ENCODE measurements at regions of chr22 and their contacts with region 1.

Region 1: DNA sequence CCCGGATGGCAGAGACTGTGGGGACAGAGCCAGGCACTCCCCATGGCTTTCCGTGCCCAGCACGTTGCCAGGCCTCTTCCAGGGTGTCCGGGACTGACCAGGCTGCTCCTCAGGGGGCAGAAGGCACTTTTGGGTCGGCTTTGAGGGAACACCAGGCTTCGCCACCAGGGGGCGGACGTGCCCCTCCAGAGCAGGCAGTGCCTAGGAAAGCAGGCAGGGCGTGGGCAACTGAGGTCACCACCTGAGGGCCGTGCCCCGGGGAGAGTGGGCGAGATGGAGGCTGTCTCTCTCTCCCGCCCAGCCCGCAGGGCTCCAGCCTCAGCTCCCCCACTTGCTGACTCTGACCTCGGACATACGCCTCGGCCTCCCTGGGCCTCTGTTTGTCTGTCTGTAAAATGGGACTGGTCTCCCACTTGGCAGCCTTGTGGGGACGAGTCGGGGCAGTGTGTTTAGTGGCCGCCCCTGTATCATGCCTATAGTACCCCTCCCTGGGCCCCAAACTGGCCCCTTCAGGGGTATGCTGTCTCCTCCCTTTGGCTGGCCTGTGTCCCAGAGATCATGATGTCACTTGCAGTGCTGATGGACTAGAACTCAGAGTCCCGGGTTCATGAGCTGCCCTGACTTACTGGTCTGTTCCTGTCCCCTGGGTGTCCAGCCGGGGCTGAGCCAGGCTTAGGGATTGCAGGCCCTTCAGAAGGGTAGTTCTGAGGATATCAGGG is 4.4 kb upstream of the PRR5 start:
- DNase-seq: no peak
- H3K4me3 ChIP-seq: no peak overlapping the region
- H3K27ac ChIP-seq: no peak overlapping the region
- H3K4me1 ChIP-seq: peaks cover 7 to 24% (median 23%) of the 10 kb centered on the region in 4 donors
- H3K27me3 ChIP-seq: peaks cover 0 to 51% (median 2%) of the 10 kb centered on the region in 4 donors
- CTCF ChIP-seq: peak; percentile 74 to 90 (median 83)
- EP300 ChIP-seq: no peak
- POLR2A ChIP-seq: no peak

Region 2: DNA sequence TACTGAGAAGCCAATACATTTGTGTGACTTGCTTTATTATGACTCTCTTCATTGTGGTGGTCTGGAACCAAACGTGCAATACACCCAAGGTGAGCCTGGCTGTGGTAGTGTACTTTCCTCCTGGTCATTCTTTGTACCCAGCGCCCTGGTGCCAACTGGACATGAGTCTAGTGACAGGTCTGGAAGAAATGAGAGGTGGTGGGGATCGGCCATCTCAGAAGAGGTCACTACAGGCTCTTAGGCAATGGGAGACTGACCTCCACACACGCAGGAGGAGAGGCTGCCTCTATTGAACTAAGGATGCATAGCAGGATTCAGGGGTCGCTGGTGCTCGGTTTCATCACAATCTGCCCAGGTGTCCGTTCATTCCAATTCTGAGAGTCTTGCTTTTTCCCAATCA is 143.2 kb before region 1 on chr22:
- intact Hi-C with region 1: no loop called
- DNase-seq: no peak
- H3K4me3 ChIP-seq: no peak overlapping the region
- H3K27ac ChIP-seq: no peak overlapping the region
- H3K4me1 ChIP-seq: peaks cover 0 to 16% (median 15%) of the 10 kb centered on the region in 4 donors
- H3K27me3 ChIP-seq: no peaks in the 10 kb centered on the region
- CTCF ChIP-seq: no peak
- EP300 ChIP-seq: no peak
- POLR2A ChIP-seq: no peak

Region 3: GRCh38 chr22:44735540-44736488 is 38.2 kb after region 1 on chr22:
- intact Hi-C with region 1: loop called (anchors 1 kb)
- DNase-seq: peak; percentile 95
- H3K4me3 ChIP-seq: no peak overlapping the region
- H3K27ac ChIP-seq: no peak overlapping the region
- H3K4me1 ChIP-seq: peaks cover 0 to 13% (median 11%) of the 10 kb centered on the region in 4 donors
- H3K27me3 ChIP-seq: peaks cover 0 to 61% (median 9%) of the 10 kb centered on the region in 4 donors
- CTCF ChIP-seq: peak; percentile 91 to 99 (median 98)
- EP300 ChIP-seq: no peak
- POLR2A ChIP-seq: no peak